ENCODE measurements at regions of chr14 and their contacts with region 1.

Region 1: GRCh38 chr14:55051426-55052268 is at the start of gene MAPK1IP1L:
- DNase-seq: peak; percentile 89
- ATAC-seq: peak; percentile 98
- H3K4me3 Mint-ChIP-seq: peak within 1 kb of the TSS; percentile 85
- H3K27ac Mint-ChIP-seq: peak within 1 kb of the TSS; percentile 95
- H3K4me1 Mint-ChIP-seq: peaks cover 35% of the 10 kb centered on the region
- H3K27me3 Mint-ChIP-seq: no peaks in the 10 kb centered on the region
- CTCF ChIP-seq: peak; percentile 100
- total RNA-seq, gene MAPK1IP1L: 89.3 to 105 TPM

Region 2: DNA sequence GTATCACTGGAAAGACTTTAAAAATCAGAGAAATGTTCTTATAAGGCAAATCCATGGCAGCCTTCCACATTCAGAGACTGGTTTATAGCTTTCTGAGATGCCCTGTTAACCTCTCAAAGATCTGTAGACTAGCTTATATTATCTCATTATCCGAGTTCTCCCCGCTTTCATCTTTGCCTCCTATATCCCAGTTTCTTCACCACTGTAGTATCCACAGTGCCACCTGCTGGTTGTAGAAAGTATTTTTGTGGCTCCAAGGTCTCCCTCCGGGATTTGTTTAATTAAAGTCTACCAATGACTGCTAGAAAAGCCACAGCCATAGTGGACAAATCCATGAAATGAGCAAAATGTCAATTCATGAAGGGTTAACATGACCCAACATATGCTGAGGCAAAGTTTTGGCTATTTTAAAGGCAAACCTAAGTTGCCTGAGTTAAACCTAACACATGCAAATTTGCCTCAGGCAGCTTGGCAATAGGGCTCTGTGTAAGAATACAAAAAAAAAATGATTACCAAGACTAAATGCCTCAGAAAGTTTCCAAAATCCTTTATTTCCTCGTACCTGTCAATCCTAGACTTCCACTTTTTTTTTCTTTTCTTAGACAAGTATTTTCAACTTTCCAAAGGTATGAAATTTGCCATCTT is 876.2 kb before region 1 on chr14:
- CTCF ChIA-PET with region 1: no interaction called
- POLR2A ChIA-PET with region 1: no interaction called
- intact Hi-C with region 1: no loop called
- DNase-seq: peak; percentile 66
- ATAC-seq: no peak
- H3K4me3 Mint-ChIP-seq: no peak overlapping the region
- H3K27ac Mint-ChIP-seq: no peak overlapping the region
- H3K4me1 Mint-ChIP-seq: no peaks in the 10 kb centered on the region
- H3K27me3 Mint-ChIP-seq: peaks cover 22% of the 10 kb centered on the region
- CTCF ChIP-seq: peak; percentile 75

Region 3: GRCh38 chr14:55038708-55039107 is 12.9 kb before region 1 on chr14:
- CTCF ChIA-PET with region 1: interaction called, 50 read pairs
- POLR2A ChIA-PET with region 1: interaction called, 14 read pairs
- intact Hi-C with region 1: no loop called
- DNase-seq: no peak
- ATAC-seq: no peak
- H3K4me3 Mint-ChIP-seq: no peak overlapping the region
- H3K27ac Mint-ChIP-seq: no peak overlapping the region
- H3K4me1 Mint-ChIP-seq: no peaks in the 10 kb centered on the region
- H3K27me3 Mint-ChIP-seq: no peaks in the 10 kb centered on the region
- CTCF ChIP-seq: no peak

Region 4: GRCh38 chr14:55071870-55072640 is 20.4 kb after region 1 on chr14:
- CTCF ChIA-PET with region 1: interaction called, 28 read pairs
- POLR2A ChIA-PET with region 1: interaction called, 23 read pairs
- intact Hi-C with region 1: no loop called
- DNase-seq: peak; percentile 42
- ATAC-seq: peak; percentile 85
- H3K4me3 Mint-ChIP-seq: peak overlapping the region; percentile 20
- H3K27ac Mint-ChIP-seq: peak overlapping the region; percentile 73
- H3K4me1 Mint-ChIP-seq: peaks cover 27% of the 10 kb centered on the region
- H3K27me3 Mint-ChIP-seq: no peaks in the 10 kb centered on the region
- CTCF ChIP-seq: no peak

Region 5: DNA sequence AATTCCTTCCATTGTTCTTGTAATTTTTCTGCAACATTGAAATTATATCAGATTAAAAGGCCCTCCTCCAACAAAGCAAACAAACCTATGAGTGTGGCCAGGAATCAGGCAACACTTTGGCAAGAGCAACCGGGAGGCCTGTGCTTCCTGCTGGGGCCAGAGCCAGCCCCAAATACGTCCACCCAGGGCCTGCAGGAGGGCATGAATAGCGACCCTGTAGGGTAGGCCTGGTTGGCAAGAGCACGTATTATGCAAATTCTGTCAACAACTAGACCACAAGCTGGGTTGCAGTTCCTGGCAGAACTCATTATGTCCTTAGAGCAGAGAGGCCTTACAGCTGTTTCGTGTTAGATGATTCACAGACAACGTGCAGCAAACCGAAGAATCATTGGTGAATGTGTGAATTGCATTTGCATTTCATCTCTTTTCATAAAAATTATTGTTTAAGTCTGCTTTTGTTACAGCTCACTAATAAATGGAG is 50.5 kb after region 1 on chr14:
- CTCF ChIA-PET with region 1: interaction called, 9 read pairs
- POLR2A ChIA-PET with region 1: interaction called, 10 read pairs
- intact Hi-C with region 1: no loop called
- DNase-seq: peak; percentile 82
- ATAC-seq: peak; percentile 67
- H3K4me3 Mint-ChIP-seq: peak overlapping the region; percentile 67
- H3K27ac Mint-ChIP-seq: peak overlapping the region; percentile 99
- H3K4me1 Mint-ChIP-seq: peaks cover 52% of the 10 kb centered on the region
- H3K27me3 Mint-ChIP-seq: no peaks in the 10 kb centered on the region
- CTCF ChIP-seq: no peak